ENCODE measurements at regions of chr9 and their contacts with region 1.

Region 1: GRCh38 chr9:125495172-125496092 is 211.6 kb downstream of the MAPKAP1 start:
- DNase-seq: peak; percentile 21
- ATAC-seq: peak; percentile 84
- H3K4me3 ChIP-seq: peak overlapping the region in 1 of 2 experiments; percentile 2; a peak in 1 of 4 replicates
- H3K27ac ChIP-seq: no peak overlapping the region
- H3K4me1 ChIP-seq: peaks cover 9 to 32% of the 10 kb centered on the region in 2 experiments
- H3K27me3 ChIP-seq: no peaks in the 10 kb centered on the region
- CTCF ChIP-seq: no peak
- POLR2A ChIP-seq: no peak
- RAD21 ChIP-seq: no peak

Region 2: DNA sequence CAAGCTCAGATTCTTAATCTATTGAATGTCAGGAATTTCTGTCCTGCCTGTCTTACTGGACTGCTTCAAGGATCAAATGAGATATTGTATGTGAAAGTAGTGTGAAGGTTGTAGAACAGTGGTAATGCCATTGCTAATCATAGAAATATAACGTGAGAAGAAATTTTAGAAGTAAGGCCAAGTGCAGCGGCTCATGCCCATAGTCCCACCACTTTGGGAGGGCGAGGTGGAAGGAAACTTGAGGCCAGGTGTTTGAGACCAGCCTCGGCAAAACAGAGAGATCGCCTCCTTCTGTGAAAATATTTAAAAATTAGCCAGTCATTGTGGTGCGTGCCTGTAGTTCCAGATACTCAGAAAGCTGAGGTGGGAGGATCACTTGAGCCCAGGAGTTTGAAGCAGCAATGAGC is 249.2 kb before region 1 on chr9:
- CTCF ChIA-PET with region 1: no interaction called
- POLR2A ChIA-PET with region 1: no interaction called
- RAD21 ChIA-PET with region 1: no interaction called
- intact Hi-C with region 1: no loop called
- DNase-seq: no peak
- ATAC-seq: no peak
- H3K4me3 ChIP-seq: no peak overlapping the region
- H3K27ac ChIP-seq: no peak overlapping the region
- H3K4me1 ChIP-seq: peaks cover 23 to 38% of the 10 kb centered on the region in 2 experiments
- H3K27me3 ChIP-seq: no peaks in the 10 kb centered on the region
- CTCF ChIP-seq: no peak
- POLR2A ChIP-seq: no peak
- RAD21 ChIP-seq: no peak

Region 3: DNA sequence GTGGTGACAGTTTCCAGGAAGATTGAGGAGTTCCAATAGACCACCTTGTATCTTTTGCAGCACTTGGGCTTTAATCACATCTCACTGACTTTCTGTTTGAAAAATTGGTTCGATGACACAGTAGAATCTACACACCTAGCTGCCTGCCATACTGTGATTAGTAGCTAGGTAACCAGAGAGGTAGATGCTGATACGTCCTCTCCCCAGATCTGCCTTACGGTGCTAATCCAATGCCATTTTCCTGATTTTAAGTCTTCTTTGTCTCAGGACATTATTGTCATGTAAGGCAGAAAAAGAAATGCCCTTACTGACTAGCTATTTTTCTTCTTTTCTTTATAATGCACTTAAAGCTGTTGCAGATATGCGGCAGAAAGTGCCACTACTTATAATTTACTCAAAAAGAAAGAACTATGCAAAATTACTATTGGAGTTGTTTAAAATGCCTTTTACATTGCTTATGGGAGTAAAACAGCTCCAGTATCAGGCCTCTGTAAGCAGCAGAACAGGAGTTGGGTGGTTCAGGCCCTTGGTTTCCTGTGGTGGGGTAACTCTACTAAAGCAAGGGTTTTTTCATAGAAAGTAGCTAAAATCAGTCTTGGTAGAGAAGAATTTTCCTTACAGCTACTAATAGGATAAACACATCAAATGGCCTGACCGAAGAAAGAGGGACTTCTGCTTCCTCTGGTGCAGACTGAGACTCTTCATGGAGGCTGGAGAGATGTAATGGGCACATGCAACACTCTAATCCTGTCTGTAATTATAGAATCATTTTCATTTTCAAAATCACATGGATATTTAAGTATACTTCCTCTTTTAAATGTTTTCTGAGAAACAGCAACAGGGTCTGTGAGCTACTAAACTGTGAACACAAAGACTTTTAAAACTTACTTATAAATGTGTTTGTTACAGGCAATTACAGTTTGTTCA is 34.4 kb after region 1 on chr9:
- CTCF ChIA-PET with region 1: no interaction called
- POLR2A ChIA-PET with region 1: no interaction called
- RAD21 ChIA-PET with region 1: no interaction called
- intact Hi-C with region 1: loop called (anchors 1 kb)
- DNase-seq: no peak
- ATAC-seq: no peak
- H3K4me3 ChIP-seq: no peak overlapping the region
- H3K27ac ChIP-seq: no peak overlapping the region
- H3K4me1 ChIP-seq: peaks cover 0 to 3% of the 10 kb centered on the region in 2 experiments; a peak in 1 of 4 replicates
- H3K27me3 ChIP-seq: no peaks in the 10 kb centered on the region
- CTCF ChIP-seq: no peak
- POLR2A ChIP-seq: no peak
- RAD21 ChIP-seq: no peak

Region 4: GRCh38 chr9:125544988-125545651 is 49.7 kb after region 1 on chr9:
- CTCF ChIA-PET with region 1: no interaction called
- POLR2A ChIA-PET with region 1: no interaction called
- RAD21 ChIA-PET with region 1: no interaction called
- intact Hi-C with region 1: no loop called
- DNase-seq: no peak
- ATAC-seq: no peak
- H3K4me3 ChIP-seq: no peak overlapping the region
- H3K27ac ChIP-seq: no peak overlapping the region
- H3K4me1 ChIP-seq: peaks cover 0 to 9% of the 10 kb centered on the region in 2 experiments; a peak in 1 of 4 replicates
- H3K27me3 ChIP-seq: no peaks in the 10 kb centered on the region
- CTCF ChIP-seq: no peak
- POLR2A ChIP-seq: no peak
- RAD21 ChIP-seq: no peak

Region 5: GRCh38 chr9:125558453-125559092 is 63.1 kb after region 1 on chr9:
- CTCF ChIA-PET with region 1: no interaction called
- POLR2A ChIA-PET with region 1: no interaction called
- RAD21 ChIA-PET with region 1: no interaction called
- intact Hi-C with region 1: no loop called
- DNase-seq: peak; percentile 50
- ATAC-seq: peak; percentile 93
- H3K4me3 ChIP-seq: no peak overlapping the region
- H3K27ac ChIP-seq: no peak overlapping the region
- H3K4me1 ChIP-seq: no peaks in the 10 kb centered on the region
- H3K27me3 ChIP-seq: no peaks in the 10 kb centered on the region
- CTCF ChIP-seq: peak; percentile 60 to 81 (median 81)
- POLR2A ChIP-seq: no peak
- RAD21 ChIP-seq: peak; percentile 86

Measured in HCT116 (cell line).